Natural killer cell (primary cell): ENCODE measurements at regions of chr12 and their contacts with region 1.

Region 1: GRCh38 chr12:96219698-96220206 is 25.6 kb downstream of the ELK3 start:
- DNase-seq: no peak
- ATAC-seq: no peak
- H3K4me3 ChIP-seq: no peak overlapping the region
- H3K4me3 Mint-ChIP-seq: no peak overlapping the region
- H3K27ac ChIP-seq: no peak overlapping the region
- H3K27ac Mint-ChIP-seq: peak overlapping the region in 1 of 2 donors; percentile 44
- H3K4me1 ChIP-seq: peaks cover 8% of the 10 kb centered on the region
- H3K4me1 Mint-ChIP-seq: peaks cover 13 to 28% of the 10 kb centered on the region in 2 donors
- H3K27me3 ChIP-seq: no peaks in the 10 kb centered on the region
- H3K27me3 Mint-ChIP-seq: no peaks in the 10 kb centered on the region
- CTCF ChIP-seq: no peak

Region 2: DNA sequence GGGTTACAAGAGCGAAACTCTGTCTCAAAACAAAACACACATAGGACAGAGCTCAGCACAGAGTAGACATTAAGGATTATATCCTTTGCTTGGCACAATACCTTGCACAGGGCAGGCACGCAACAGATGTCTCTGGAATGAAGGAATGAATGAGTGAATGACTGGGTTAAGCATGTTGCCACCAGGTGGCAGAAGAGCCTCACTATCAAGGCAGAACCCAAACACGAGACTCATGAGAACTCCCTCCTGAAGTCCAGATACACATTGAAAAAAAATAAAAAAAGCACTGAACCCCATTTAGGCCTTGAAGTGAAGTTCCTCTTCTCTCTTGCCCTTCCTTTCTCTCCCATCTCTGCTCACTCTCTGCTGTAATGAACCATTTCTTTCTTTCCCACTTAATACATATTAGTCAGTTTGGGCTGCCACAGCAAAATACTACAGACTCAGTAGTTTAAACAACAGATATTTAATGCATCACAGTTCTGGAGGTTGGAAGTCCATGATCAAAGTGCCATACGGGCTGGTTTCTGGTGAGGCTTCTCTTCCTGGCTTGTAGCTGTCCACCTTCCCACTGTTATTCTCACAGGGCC is 157.8 kb before region 1 on chr12:
- intact Hi-C with region 1: loop called (anchors 1 kb)
- DNase-seq: peak; percentile 61 to 91
- ATAC-seq: peak; percentile 83 to 96 (median 92)
- H3K4me3 ChIP-seq: no peak overlapping the region
- H3K4me3 Mint-ChIP-seq: no peak overlapping the region
- H3K27ac ChIP-seq: no peak overlapping the region
- H3K27ac Mint-ChIP-seq: no peak overlapping the region
- H3K4me1 ChIP-seq: peaks cover 11% of the 10 kb centered on the region
- H3K4me1 Mint-ChIP-seq: peaks cover 26 to 29% of the 10 kb centered on the region in 2 donors
- H3K27me3 ChIP-seq: no peaks in the 10 kb centered on the region
- H3K27me3 Mint-ChIP-seq: peaks cover 3 to 8% of the 10 kb centered on the region in 2 donors
- CTCF ChIP-seq: peak; percentile 75

Region 3: GRCh38 chr12:96120359-96121100 is 99.2 kb before region 1 on chr12:
- intact Hi-C with region 1: loop called (anchors 10 kb)
- DNase-seq: peak; percentile 17 to 26
- ATAC-seq: peak; percentile 87 to 97 (median 91)
- H3K4me3 ChIP-seq: no peak overlapping the region
- H3K4me3 Mint-ChIP-seq: peak overlapping the region; percentile 49
- H3K27ac ChIP-seq: peak overlapping the region; percentile 71
- H3K27ac Mint-ChIP-seq: peak overlapping the region in 1 of 2 donors; percentile 34
- H3K4me1 ChIP-seq: peaks cover 14% of the 10 kb centered on the region
- H3K4me1 Mint-ChIP-seq: peaks cover 17 to 21% of the 10 kb centered on the region in 2 donors
- H3K27me3 ChIP-seq: no peaks in the 10 kb centered on the region
- H3K27me3 Mint-ChIP-seq: peaks cover 0 to 8% of the 10 kb centered on the region in 2 donors
- CTCF ChIP-seq: no peak

Region 4: DNA sequence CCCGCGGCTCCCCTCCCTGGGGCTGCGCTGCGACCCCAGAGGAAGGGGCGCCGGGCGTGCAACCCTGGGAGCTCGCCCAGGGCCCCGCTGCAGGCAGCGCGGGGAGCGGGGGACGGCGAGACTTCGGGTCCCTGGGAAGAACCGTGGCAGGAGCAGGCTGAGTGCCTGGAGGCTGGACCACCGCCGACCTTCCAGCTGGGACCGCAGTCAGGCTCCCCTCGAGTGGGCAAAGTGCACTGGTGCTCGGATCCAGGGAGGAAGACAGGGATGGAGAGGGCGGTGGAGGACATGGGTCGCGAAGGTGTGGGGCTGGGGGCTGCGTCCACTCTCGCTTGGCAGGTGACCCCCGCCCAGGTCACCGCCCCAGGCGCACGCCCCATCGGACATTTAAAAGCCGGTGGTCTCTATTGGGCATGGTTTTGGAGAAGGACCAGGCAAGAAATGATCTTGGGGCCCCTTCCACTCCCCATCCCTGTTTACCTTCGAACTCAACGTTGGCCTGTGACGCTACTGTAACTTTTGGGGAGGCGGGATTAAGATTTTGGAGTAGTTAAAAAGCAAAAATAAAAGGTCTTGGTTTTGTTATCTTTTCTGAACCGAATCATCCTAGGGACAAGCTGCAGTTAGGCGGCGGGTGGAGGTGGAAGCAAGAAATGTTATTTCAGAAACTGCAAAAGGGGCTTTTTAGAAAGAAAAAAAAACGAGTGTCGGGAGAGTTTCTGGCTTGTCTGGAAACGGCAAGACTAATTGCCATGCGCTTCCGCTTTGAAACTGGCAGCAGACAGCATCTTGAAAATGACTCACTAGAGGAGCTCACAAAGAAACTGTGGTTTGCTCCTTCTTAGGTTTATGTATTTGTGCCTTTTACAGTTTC is 24.5 kb before region 1 on chr12:
- intact Hi-C with region 1: loop called (anchors 2 kb)
- DNase-seq: peak; percentile 53 to 91
- ATAC-seq: peak; percentile 60 to 76 (median 71)
- H3K4me3 ChIP-seq: peak overlapping the region; percentile 78
- H3K4me3 Mint-ChIP-seq: peak overlapping the region; percentile 99
- H3K27ac ChIP-seq: peak overlapping the region; percentile 81
- H3K27ac Mint-ChIP-seq: peak overlapping the region; percentile 97
- H3K4me1 ChIP-seq: peaks cover 21% of the 10 kb centered on the region
- H3K4me1 Mint-ChIP-seq: peaks cover 30 to 41% of the 10 kb centered on the region in 2 donors
- H3K27me3 ChIP-seq: no peaks in the 10 kb centered on the region
- H3K27me3 Mint-ChIP-seq: no peaks in the 10 kb centered on the region
- CTCF ChIP-seq: no peak

Region 5: GRCh38 chr12:96516472-96517430 is 297.0 kb after region 1 on chr12:
- intact Hi-C with region 1: loop called (anchors 1 kb)
- DNase-seq: peak; percentile 77 to 93
- ATAC-seq: peak; percentile 87 to 95 (median 93)
- H3K4me3 ChIP-seq: no peak overlapping the region
- H3K4me3 Mint-ChIP-seq: peak overlapping the region; percentile 13
- H3K27ac ChIP-seq: no peak overlapping the region
- H3K27ac Mint-ChIP-seq: peak overlapping the region; percentile 62 to 80
- H3K4me1 ChIP-seq: peaks cover 2% of the 10 kb centered on the region
- H3K4me1 Mint-ChIP-seq: peaks cover 4 to 6% of the 10 kb centered on the region in 2 donors
- H3K27me3 ChIP-seq: no peaks in the 10 kb centered on the region
- H3K27me3 Mint-ChIP-seq: peaks cover 0 to 4% of the 10 kb centered on the region in 2 donors
- CTCF ChIP-seq: peak; percentile 84